Left ventricle myocardium superior (tissue), 1 donor: ENCODE measurements at regions of chr15 and their contacts with region 1.

Region 1: DNA sequence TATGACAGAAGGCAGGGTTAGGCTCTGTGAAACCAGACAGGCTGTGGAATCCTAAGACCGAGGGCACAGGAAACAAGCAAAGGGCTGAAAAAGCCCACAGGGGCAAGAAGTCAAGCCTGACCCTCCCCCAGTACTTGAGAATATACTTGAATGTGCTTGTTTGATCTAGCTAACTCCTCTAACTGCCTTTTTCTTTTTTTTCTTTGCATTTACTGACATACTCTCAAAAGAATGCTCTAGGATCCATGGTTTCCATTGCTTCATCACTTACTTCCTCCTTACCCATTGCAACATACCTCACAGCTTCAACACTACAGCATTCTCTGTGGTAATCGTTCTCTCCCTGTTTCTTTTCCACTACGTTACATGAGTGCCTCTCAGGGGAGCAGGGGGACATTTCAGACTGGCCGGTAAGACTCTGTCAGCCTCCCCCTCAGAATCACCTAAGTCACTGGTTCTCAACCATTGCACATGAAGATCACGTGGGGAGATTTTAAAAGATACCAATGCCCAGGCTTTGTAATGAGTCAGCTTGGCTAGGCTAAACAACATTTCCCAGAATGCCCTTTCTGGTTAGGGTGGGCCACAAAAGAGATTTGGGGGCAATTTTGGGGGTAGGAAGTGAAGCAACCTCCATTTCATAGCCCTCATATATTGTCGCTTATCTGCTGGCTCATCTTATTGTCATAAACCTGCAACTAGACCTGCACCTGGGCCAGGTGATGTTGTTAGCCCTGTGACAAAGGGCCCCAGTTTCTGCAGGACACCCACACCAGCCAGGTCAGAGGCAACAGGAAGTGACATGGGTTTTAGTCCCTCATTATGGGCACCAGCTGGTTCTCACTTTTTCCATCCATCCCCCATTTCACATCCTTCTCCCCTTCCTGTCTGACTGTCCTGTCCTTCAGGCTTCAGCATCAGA is 24.6 kb upstream of the RSL24D1 start:
- DNase-seq: no peak
- ATAC-seq: peak; percentile 74

Region 2: DNA sequence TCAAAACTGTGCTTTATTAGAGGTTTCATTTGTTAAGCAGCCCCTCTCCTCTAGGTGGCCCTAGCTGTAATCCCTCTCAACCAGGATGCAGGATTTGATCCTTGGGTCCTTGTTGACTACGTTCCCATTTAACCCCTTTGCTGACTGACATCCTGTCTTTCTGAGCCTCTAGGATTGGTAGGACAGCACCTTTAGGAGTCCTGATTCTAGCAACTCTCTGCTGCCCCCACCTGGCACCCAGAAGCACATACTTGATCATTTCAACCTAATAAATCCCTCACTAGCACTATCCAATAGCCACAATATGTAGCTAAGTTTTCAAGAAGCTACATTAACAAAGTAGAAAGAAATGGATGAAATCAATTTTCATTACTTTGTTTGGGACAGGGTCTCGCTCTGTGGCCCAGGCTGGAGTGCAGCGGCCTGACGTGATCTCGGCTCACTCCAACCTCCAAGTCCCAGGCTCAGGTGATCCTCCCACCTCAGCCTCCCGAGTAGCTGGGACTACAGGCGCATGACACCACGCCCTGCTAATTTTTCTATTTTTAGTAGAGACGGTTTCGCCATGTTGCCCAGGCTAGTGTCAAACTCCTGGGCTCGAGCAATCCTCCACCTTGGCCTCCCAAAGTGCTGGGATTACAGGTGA is 52.9 kb before region 1 on chr15:
- intact Hi-C with region 1: no loop called
- DNase-seq: peak; percentile 32
- ATAC-seq: peak; percentile 41

Region 3: DNA sequence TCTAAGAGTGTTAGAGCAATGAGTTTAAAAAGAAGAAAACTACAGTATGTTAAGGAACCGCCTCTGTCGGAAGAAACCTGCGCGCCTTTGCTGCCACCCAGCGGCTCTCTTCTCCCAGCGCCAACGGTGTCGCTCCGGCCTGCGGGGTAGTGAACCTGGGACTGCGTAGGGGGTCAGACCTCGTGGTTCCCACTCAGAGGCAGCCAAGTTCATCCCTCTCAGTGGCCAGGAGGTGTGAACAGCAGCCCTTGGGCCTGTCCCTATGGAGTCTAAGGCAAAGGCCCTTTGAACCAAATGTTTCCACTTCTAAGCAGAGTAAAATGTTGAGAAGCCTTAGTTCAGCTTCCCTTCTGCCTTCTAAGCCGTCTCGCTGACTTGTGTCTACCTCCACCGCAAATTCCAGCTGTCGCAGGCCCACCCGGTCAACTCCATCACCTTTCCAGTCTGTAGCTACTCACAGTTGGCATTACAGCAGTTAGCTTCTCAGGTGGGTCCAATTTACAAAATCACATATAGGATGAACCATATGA is 69.2 kb after region 1 on chr15:
- intact Hi-C with region 1: loop called (anchors 2 kb)
- DNase-seq: peak; percentile 89
- ATAC-seq: peak; percentile 94

Region 4: DNA sequence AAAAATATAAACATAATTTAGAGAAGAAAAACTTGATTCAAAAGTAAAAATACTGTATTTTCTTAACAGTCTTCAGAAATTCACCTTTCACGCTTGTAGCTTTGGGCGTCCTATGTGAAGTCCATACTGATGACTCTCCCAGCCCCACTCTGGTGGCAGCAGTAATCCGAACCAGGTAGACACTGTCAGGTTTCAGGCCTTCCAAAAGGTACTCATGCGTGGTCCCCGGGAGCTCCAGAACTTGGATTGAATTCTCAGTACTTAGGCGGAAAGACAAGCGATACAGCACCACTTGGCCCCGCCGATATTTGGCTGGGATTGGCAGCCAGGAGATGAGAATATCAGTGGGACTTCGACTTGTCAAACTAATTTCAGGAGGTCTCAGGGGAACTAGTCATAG is 451.9 kb after region 1 on chr15:
- intact Hi-C with region 1: no loop called
- DNase-seq: no peak
- ATAC-seq: no peak